Tibial artery (tissue), 4 donors: ENCODE measurements at regions of chr10 and their contacts with region 1.

Region 1: GRCh38 chr10:35336084-35336831 is at the start of gene CCNY:
- DNase-seq: peak; percentile 63 to 85
- H3K4me3 ChIP-seq: peak within 1 kb of the TSS; percentile 98
- H3K27ac ChIP-seq: peak within 1 kb of the TSS; percentile 89 to 94
- H3K4me1 ChIP-seq: peaks cover 0 to 75% (median 41%) of the 10 kb centered on the region in 4 donors
- H3K27me3 ChIP-seq: no peaks in the 10 kb centered on the region
- CTCF ChIP-seq: no peak

Region 2: DNA sequence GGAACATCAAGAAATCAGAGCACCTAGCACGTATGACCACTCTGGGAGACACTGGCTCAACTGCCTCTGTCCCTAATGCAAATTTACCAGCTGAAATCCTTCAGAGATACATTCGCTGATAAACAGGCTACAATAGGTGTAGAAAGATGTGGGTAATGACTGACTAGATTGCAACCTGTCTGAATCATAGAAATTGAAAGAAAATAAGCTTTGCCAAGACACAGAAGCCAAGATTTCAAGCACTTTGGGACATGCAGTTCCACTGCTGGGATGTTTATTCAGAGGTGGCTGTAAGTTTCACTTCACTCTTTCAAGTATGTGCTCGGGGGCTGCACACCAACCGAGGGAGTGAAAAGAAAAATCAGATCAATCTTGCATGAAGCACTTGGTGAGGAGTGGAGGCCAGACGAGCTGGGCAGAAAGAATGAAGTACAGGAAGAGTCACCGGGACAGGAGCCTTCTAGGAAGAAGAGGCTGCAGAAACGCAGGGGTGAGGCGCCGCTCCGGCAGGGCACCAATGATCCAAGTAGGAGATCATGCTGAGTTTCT is 797.9 kb before region 1 on chr10:
- intact Hi-C with region 1: no loop called
- DNase-seq: no peak
- H3K4me3 ChIP-seq: peak overlapping the region; percentile 4 to 15
- H3K27ac ChIP-seq: peak overlapping the region in 1 of 2 donors; percentile 7
- H3K4me1 ChIP-seq: peaks cover 0 to 23% (median 12%) of the 10 kb centered on the region in 4 donors
- H3K27me3 ChIP-seq: no peaks in the 10 kb centered on the region
- CTCF ChIP-seq: no peak

Region 3: GRCh38 chr10:35409094-35409582 is 72.9 kb after region 1 on chr10:
- intact Hi-C with region 1: loop called (anchors 10 kb)
- DNase-seq: peak in 1 of 2 donors; percentile 29
- H3K4me3 ChIP-seq: no peak overlapping the region
- H3K27ac ChIP-seq: peak overlapping the region; percentile 33 to 38
- H3K4me1 ChIP-seq: peaks cover 0 to 31% (median 25%) of the 10 kb centered on the region in 4 donors
- H3K27me3 ChIP-seq: no peaks in the 10 kb centered on the region
- CTCF ChIP-seq: no peak

Region 4: DNA sequence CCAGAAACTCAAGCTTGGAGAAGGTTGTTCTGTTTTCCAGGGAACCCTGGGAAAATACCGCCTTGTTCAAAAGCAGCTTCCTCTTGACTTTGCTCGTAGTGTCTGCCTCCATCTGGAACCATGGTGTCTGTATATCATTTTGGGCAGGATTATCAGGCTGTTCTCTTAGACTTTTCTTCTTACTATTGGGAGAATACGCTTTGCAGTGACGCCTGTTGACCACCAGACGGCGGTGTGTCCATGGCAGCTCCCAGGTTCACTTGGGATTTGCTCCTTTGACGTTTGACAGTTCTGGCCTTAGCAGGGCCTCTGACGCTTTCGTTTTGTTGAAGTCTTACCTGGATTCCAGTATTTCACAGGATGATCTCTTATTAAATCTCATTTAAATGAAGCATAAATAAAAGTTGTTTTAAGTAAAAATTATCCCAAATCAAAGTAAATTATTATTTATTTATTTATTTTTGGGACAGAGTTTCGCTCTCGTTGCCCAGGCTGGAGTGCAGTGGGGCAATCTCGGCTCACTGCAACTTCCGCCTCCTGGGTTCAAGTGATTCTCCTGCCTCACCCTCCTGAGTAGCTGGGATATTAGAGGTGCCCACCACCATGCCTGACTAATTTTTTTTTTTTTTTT is 227.1 kb after region 1 on chr10:
- intact Hi-C with region 1: loop called (anchors 5 kb)
- DNase-seq: peak in 1 of 2 donors; percentile 33
- H3K4me3 ChIP-seq: no peak overlapping the region
- H3K27ac ChIP-seq: no peak overlapping the region
- H3K4me1 ChIP-seq: peaks cover 0 to 39% (median 25%) of the 10 kb centered on the region in 4 donors
- H3K27me3 ChIP-seq: no peaks in the 10 kb centered on the region
- CTCF ChIP-seq: peak; percentile 89 to 96